Ovary (tissue), 10 donors: ENCODE measurements at regions of chr13 and their contacts with region 1.

Region 1: GRCh38 chr13:112417079-112417478 is 40.9 kb downstream of the SPACA7 start:
- DNase-seq: no peak
- H3K4me3 ChIP-seq: no peak overlapping the region
- H3K27ac ChIP-seq: no peak overlapping the region
- H3K4me1 ChIP-seq: no peaks in the 10 kb centered on the region
- H3K27me3 ChIP-seq: no peaks in the 10 kb centered on the region
- CTCF ChIP-seq: no peak
- EP300 ChIP-seq: no peak
- POLR2A ChIP-seq: no peak

Region 2: GRCh38 chr13:113584205-113584869 is 1167.3 kb after region 1 on chr13 and contains the start of gene TFDP1:
- intact Hi-C with region 1: loop called in 1 of 4 experiments (anchors 5 kb)
- DNase-seq: peak; percentile 34 to 84 (median 67)
- H3K4me3 ChIP-seq: peak within 1 kb of the TSS; percentile 52
- H3K27ac ChIP-seq: no peak within 1 kb of the TSS
- H3K4me1 ChIP-seq: peaks cover 4% of the 10 kb centered on the region
- H3K27me3 ChIP-seq: no peaks in the 10 kb centered on the region
- CTCF ChIP-seq: no peak
- EP300 ChIP-seq: no peak
- POLR2A ChIP-seq: no peak
- total RNA-seq, gene TFDP1: 8.8 to 45.6 (median 33.8) TPM